ENCODE measurements at regions of chr21 and their contacts with region 1.

Region 1: GRCh38 chr21:28111151-28111619 is 881.5 kb downstream of the LTN1 start:
- DNase-seq: peak in 4 of 5 donors; percentile 70 to 80 (median 76)
- ATAC-seq: peak; percentile 96 to 100 (median 99)
- H3K4me3 ChIP-seq: peak overlapping the region in 7 of 12 donors; percentile 1 to 32 (median 16)
- H3K27ac ChIP-seq: peak overlapping the region in 10 of 12 donors; percentile 14 to 71 (median 53)
- H3K4me1 ChIP-seq: peaks cover 0 to 14% (median 7%) of the 10 kb centered on the region in 12 donors
- H3K27me3 ChIP-seq: no peaks in the 10 kb centered on the region
- CTCF ChIP-seq: no peak
- POLR2A ChIP-seq: no peak

Region 2: DNA sequence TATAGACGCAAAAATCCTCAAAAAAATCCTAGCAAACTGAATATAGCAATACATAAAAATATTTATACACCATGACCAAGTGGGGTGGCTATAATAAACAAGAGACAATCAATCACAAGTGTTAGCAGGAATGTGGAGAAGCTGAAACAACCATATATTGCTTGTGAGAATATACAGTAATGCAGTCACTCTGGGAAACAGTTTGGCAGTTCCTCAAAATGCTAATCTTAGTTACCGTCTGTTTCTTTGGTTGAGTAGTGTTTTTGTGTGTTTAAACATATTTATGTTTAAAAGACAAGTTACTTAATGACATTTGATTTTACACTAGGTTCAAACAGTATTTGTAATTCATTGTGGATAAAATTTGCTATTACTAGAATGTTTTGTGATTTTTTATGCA is 89.5 kb after region 1 on chr21:
- intact Hi-C with region 1: no loop called
- DNase-seq: no peak
- ATAC-seq: no peak
- H3K4me3 ChIP-seq: no peak overlapping the region
- H3K27ac ChIP-seq: no peak overlapping the region
- H3K4me1 ChIP-seq: no peaks in the 10 kb centered on the region
- H3K27me3 ChIP-seq: no peaks in the 10 kb centered on the region
- CTCF ChIP-seq: no peak
- POLR2A ChIP-seq: no peak

Region 3: GRCh38 chr21:28235169-28235895 is 124.1 kb after region 1 on chr21:
- intact Hi-C with region 1: loop called in 2 of 10 experiments (anchors 10 kb)
- DNase-seq: peak in 1 of 5 donors; percentile 31
- ATAC-seq: peak; percentile 11 to 64 (median 36)
- H3K4me3 ChIP-seq: no peak overlapping the region
- H3K27ac ChIP-seq: peak overlapping the region in 1 of 12 donors; percentile 59
- H3K4me1 ChIP-seq: peaks cover 0 to 28% (median 8%) of the 10 kb centered on the region in 12 donors
- H3K27me3 ChIP-seq: no peaks in the 10 kb centered on the region
- CTCF ChIP-seq: peak in 5 of 12 donors; percentile 4 to 19 (median 6)
- POLR2A ChIP-seq: no peak

Measured in heart left ventricle (tissue), 16 donors.